ENCODE measurements at regions of chr4 and their contacts with region 1.

Region 1: GRCh38 chr4:114582621-114583020 is 16.0 kb upstream of the UGT8 start:
- DNase-seq: no peak
- H3K4me3 ChIP-seq: no peak overlapping the region
- H3K27ac ChIP-seq: no peak overlapping the region
- H3K4me1 ChIP-seq: no peaks in the 10 kb centered on the region
- H3K27me3 ChIP-seq: no peaks in the 10 kb centered on the region
- CTCF ChIP-seq: no peak
- EP300 ChIP-seq: no peak
- POLR2A ChIP-seq: no peak

Region 2: DNA sequence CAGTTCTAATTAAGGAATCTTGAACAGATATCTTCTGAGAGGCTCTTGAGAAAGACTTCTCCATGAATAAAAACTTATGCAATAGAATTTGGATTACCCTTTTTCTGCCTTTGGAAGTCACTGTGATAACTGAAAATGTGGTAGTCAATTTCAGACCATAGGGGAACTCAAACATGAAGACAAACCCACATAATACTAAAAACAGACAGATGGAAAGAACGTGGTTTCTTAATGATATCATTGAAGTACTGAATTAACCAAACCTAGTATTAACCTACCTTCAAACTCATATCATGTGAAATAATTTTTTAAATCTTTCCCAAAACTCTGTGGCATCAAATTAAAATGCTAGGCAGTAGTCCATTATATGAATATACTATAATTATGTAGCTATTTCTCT is 974.6 kb before region 1 on chr4:
- intact Hi-C with region 1: no loop called
- DNase-seq: no peak
- H3K4me3 ChIP-seq: no peak overlapping the region
- H3K27ac ChIP-seq: no peak overlapping the region
- H3K4me1 ChIP-seq: no peaks in the 10 kb centered on the region
- H3K27me3 ChIP-seq: no peaks in the 10 kb centered on the region
- CTCF ChIP-seq: no peak
- EP300 ChIP-seq: no peak
- POLR2A ChIP-seq: no peak

Region 3: DNA sequence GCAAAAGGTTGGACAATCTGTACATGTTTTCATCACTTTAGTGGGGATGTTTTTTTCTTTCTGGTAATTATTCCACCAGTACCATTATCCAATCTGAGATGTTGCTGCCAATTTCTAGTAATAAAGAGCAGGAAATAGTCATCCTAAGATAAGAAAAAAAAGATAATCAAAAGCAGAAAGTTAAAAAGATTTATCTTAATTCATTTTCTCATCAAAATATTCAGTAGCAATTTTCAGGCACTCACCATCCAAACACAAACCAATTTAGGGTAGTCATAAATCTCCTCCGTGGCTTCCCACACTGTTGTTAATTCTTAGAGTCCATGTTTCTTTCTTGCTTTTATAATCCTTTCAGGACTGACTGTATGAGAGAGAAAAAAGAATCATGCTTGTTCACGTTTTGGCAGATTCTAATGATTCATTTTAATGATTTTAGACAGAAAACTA is 247.7 kb before region 1 on chr4:
- intact Hi-C with region 1: no loop called
- DNase-seq: no peak
- H3K4me3 ChIP-seq: no peak overlapping the region
- H3K27ac ChIP-seq: no peak overlapping the region
- H3K4me1 ChIP-seq: no peaks in the 10 kb centered on the region
- H3K27me3 ChIP-seq: no peaks in the 10 kb centered on the region
- CTCF ChIP-seq: no peak
- EP300 ChIP-seq: no peak
- POLR2A ChIP-seq: no peak

Region 4: GRCh38 chr4:114593526-114593925 is 10.9 kb after region 1 on chr4:
- intact Hi-C with region 1: loop called in 1 of 4 experiments (anchors 1 kb)
- DNase-seq: no peak
- H3K4me3 ChIP-seq: no peak overlapping the region
- H3K27ac ChIP-seq: no peak overlapping the region
- H3K4me1 ChIP-seq: no peaks in the 10 kb centered on the region
- H3K27me3 ChIP-seq: no peaks in the 10 kb centered on the region
- CTCF ChIP-seq: no peak
- EP300 ChIP-seq: no peak
- POLR2A ChIP-seq: no peak